Activated CD4-positive, alpha-beta T cell treated with anti-CD3 and anti-CD28 coated beads for 36 hours (primary cell): ENCODE measurements at regions of chr3 and their contacts with region 1.

Region 1: GRCh38 chr3:9649791-9650521 is 651 bp downstream of the MTMR14 start:
- DNase-seq: no peak
- ATAC-seq: peak; percentile 1
- H3K4me3 Mint-ChIP-seq: peak overlapping the region; percentile 95
- H3K27ac Mint-ChIP-seq: peak overlapping the region; percentile 92
- H3K4me1 Mint-ChIP-seq: peaks cover 24% of the 10 kb centered on the region
- H3K27me3 Mint-ChIP-seq: no peaks in the 10 kb centered on the region

Region 2: GRCh38 chr3:8963137-8963869 is 686.7 kb before region 1 on chr3 and contains the start of gene RAD18:
- CTCF ChIA-PET with region 1: no interaction called
- POLR2A ChIA-PET with region 1: no interaction called
- intact Hi-C with region 1: loop called (anchors 1 to 2 kb)
- DNase-seq: peak; percentile 95
- ATAC-seq: peak; percentile 94
- H3K4me3 Mint-ChIP-seq: peak within 1 kb of the TSS; percentile 95
- H3K27ac Mint-ChIP-seq: peak within 1 kb of the TSS; percentile 93
- H3K4me1 Mint-ChIP-seq: peaks cover 32% of the 10 kb centered on the region
- H3K27me3 Mint-ChIP-seq: no peaks in the 10 kb centered on the region
- total RNA-seq, gene RAD18: 47.8 to 50.5 TPM

Region 3: DNA sequence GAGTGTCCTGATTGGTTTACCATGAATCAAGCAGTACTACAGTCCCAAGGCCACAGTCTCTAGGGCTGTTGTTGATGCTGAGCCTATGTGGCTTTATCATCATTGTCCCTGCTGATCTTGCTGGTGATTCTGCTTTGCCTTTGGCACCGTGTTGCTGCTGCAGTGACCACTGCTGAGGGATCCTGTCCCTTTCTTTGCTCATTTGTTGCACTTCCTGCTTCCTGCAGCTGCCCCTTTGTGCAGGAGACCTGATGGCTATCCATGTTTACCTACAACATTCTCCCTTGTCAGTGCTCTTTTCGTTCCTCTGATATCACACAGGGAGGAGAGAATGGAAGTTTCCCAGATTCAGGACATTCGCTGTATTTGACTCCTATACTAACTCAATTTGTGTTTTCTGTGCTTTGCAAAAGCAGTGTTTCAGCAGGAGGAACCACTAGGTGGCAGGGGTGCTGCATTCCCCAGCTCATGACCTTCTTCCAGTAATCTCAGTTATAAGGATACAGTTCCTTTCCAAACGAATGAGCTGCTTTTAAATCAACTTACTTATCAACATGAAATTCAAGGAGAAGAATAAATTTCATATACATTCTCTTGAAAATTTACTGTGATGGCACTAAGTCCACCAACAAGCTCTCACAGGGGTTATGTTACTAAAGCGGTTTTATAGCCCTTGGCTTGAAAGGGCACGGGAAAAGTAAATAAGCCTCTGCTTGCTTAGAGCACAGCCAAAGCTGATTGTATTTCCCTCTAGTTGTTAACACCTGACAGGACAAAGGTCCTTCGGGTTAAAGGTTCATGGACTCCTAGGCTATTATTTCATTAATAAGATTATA is 296.8 kb before region 1 on chr3:
- CTCF ChIA-PET with region 1: no interaction called
- POLR2A ChIA-PET with region 1: no interaction called
- intact Hi-C with region 1: loop called in 1 of 2 experiments (anchors 2 kb)
- DNase-seq: peak; percentile 76
- ATAC-seq: peak; percentile 47
- H3K4me3 Mint-ChIP-seq: no peak overlapping the region
- H3K27ac Mint-ChIP-seq: peak overlapping the region; percentile 24
- H3K4me1 Mint-ChIP-seq: peaks cover 24% of the 10 kb centered on the region
- H3K27me3 Mint-ChIP-seq: no peaks in the 10 kb centered on the region

Region 4: GRCh38 chr3:9362731-9363530 is 287.0 kb before region 1 on chr3 and contains the start of gene THUMPD3:
- CTCF ChIA-PET with region 1: no interaction called
- POLR2A ChIA-PET with region 1: no interaction called
- intact Hi-C with region 1: loop called (anchors 1 to 2 kb)
- DNase-seq: peak; percentile 96
- ATAC-seq: peak; percentile 93
- H3K4me3 Mint-ChIP-seq: peak within 1 kb of the TSS; percentile 98
- H3K27ac Mint-ChIP-seq: peak within 1 kb of the TSS; percentile 100
- H3K4me1 Mint-ChIP-seq: peaks cover 21% of the 10 kb centered on the region
- H3K27me3 Mint-ChIP-seq: no peaks in the 10 kb centered on the region
- total RNA-seq, gene THUMPD3: 59.6 to 74.3 TPM

Region 5: GRCh38 chr3:9749645-9750555 is 99.9 kb after region 1 on chr3 and contains the start of gene OGG1:
- CTCF ChIA-PET with region 1: no interaction called
- POLR2A ChIA-PET with region 1: interaction called, 4 read pairs
- intact Hi-C with region 1: loop called in 1 of 2 experiments (anchors 1 kb)
- DNase-seq: peak; percentile 98
- ATAC-seq: peak; percentile 94
- H3K4me3 Mint-ChIP-seq: peak within 1 kb of the TSS; percentile 87
- H3K27ac Mint-ChIP-seq: peak within 1 kb of the TSS; percentile 91
- H3K4me1 Mint-ChIP-seq: peaks cover 46% of the 10 kb centered on the region
- H3K27me3 Mint-ChIP-seq: no peaks in the 10 kb centered on the region
- total RNA-seq, gene OGG1: 36.4 to 61.6 TPM

Region 6: DNA sequence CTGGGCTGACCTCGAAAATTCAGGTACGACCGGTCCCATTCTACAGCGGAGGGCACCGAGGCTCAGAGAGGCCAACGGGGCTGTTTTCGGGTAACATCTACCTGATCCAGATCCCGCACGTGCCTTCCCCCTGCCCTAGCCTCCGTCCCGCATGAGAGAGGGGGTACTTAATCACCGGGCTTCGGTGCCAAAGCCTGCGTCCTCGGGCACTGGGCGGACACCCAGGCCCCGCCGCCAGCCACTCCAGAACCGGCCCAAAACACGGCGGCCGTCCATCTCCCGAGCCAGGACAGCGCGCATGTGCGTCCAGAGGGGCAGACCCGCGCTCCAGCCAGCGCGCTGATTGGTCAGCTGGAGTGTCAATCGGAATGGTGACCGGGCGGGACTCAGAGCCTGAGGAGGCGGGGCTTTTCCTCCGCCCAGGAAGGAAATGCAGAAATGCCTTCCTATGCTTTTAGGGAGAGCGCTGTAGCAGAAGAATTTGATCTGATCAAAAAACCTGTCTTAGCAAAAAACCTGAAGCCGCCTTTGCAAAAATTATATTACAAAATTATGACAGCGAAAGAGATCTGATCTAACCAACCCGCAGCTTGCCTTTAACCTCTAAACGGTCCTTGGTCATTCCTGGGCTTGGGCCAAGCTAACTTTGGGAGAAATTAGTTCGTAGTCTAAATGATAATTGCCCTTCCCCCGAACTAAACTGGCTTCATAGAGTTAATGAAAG is 193.9 kb after region 1 on chr3 and contains the start of gene RPUSD3:
- CTCF ChIA-PET with region 1: no interaction called
- POLR2A ChIA-PET with region 1: no interaction called
- intact Hi-C with region 1: loop called in 1 of 2 experiments (anchors 1 kb)
- DNase-seq: peak; percentile 98
- ATAC-seq: peak; percentile 97
- H3K4me3 Mint-ChIP-seq: peak within 1 kb of the TSS; percentile 99
- H3K27ac Mint-ChIP-seq: peak within 1 kb of the TSS; percentile 96
- H3K4me1 Mint-ChIP-seq: peaks cover 28% of the 10 kb centered on the region
- H3K27me3 Mint-ChIP-seq: no peaks in the 10 kb centered on the region
- total RNA-seq, gene RPUSD3: 79.2 to 81.5 TPM

Region 7: GRCh38 chr3:9890249-9891071 is 240.5 kb after region 1 on chr3 and contains the start of gene JAGN1:
- CTCF ChIA-PET with region 1: interaction called, 4 read pairs
- POLR2A ChIA-PET with region 1: no interaction called
- intact Hi-C with region 1: loop called in 1 of 2 experiments (anchors 1 kb)
- DNase-seq: peak; percentile 96
- ATAC-seq: peak; percentile 82
- H3K4me3 Mint-ChIP-seq: peak within 1 kb of the TSS; percentile 96
- H3K27ac Mint-ChIP-seq: peak within 1 kb of the TSS; percentile 98
- H3K4me1 Mint-ChIP-seq: peaks cover 34% of the 10 kb centered on the region
- H3K27me3 Mint-ChIP-seq: no peaks in the 10 kb centered on the region
- total RNA-seq, gene JAGN1: 27.1 to 33.0 TPM

Region 8: DNA sequence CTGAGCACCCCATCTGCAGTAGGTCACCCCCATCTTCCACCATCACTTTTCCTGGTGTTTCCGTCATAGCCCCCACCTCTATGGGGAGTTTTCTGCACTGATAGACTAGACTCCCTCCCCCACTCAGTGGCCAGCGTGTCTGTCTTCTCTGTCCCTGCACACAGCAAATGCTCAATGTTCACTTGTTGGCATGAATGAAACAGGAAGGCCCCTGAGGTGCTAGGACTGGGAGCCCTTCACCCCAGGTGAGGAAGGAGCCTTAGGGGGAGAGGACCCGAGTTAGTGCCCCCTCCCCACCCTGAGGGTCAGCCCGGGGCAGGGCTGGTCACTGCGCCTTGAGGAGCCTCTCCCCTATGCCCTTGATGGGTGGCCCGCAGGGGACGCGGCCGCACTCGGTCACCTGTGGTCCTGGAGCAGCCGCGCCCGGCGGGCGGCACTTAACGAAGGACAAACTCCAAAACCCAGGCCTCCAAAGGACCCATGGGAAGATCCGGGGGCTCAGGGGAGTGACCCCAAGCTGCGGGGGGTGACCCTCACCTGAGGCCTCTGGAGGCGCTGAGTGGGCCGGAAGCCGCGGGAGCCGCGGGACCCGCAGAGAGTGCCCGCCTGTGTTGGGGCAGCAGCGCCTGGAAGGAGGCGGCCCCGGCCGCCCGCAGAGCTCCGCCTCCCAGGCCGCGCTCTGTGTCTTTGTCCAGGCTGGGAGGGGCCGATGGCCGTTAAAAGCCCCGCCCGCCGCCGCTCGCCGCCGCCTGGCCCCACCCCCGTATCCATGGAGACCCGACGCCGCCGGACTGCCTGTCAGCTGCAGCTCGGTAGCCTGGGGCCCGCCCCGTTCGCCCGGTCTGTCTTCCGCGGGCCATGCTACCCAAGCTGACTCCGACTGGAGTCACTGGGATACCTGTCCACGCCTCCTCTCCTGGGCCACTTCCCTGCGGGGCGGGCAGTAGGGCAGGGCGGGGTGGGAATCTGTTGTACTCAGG is 360.8 kb after region 1 on chr3:
- CTCF ChIA-PET with region 1: no interaction called
- POLR2A ChIA-PET with region 1: no interaction called
- intact Hi-C with region 1: no loop called
- DNase-seq: peak; percentile 92
- ATAC-seq: peak; percentile 83
- H3K4me3 Mint-ChIP-seq: peak overlapping the region; percentile 22
- H3K27ac Mint-ChIP-seq: no peak overlapping the region
- H3K4me1 Mint-ChIP-seq: peaks cover 20% of the 10 kb centered on the region
- H3K27me3 Mint-ChIP-seq: peaks cover 6% of the 10 kb centered on the region